Left ventricle myocardium superior (tissue), 1 donor: ENCODE measurements at regions of chr3 and their contacts with region 1.

Region 1: DNA sequence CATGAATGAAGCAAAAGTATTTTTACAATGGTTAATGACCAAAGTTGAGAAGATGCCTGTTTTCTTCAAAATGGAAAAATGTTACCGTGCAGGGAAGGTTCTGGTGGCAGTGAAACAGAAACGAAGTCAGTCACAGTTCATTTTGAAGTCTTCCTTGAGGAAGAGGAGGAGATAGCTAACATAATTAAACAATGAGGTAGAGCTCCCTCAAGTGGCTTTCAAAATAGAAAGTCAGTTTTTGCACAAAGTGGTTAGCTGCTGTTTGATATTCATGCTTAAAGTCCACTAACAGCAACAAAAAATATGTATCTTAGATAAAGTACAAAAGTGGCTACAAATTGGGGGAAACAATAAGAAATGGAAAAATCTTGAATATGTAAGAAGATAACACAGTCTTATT is 87.3 kb downstream of the TFG start:
- DNase-seq: no peak
- ATAC-seq: peak; percentile 38

Region 2: DNA sequence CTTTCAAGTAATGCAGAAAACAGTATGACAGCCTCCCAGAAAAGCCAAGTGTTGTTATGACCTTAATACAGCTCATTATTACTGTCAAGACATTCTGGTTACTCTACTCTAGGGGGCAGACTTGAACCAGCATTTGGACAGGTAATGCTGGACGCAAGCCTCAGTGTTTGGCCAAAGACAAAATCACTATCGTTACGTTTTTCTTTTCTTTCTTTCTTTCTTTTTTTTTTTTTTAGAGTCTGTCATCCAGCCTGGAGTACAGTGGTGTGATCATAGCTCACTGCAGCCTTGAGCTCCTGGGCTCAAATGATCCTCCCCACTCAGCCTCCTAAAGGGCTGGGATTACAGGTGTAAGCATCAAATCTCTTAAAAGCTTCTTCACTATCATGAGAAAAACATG is 333.6 kb before region 1 on chr3:
- intact Hi-C with region 1: loop called (anchors 10 kb)
- DNase-seq: no peak
- ATAC-seq: peak; percentile 84

Region 3: DNA sequence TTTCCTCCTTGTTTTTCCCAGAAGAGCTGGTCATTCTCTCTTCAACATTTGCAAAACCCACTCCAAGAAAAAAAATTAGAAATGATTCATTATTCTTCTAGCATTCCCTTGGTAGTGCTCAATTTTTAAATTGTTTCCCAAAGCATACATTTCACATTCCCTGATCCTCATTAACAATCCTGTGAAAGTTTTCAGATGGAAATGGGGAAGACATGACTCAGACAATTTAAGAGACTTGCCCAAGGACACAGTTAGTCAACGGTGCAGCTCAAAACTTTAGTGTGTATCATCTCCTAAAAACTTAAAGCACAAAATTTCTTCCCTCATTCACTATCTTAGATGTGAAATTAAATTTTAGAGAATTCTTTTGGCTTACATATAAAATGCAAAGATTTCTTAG is 213.7 kb after region 1 on chr3:
- intact Hi-C with region 1: no loop called
- DNase-seq: no peak
- ATAC-seq: no peak